CD4-positive, alpha-beta T cell (primary cell): ENCODE measurements at regions of chr16 and their contacts with region 1.

Region 1: DNA sequence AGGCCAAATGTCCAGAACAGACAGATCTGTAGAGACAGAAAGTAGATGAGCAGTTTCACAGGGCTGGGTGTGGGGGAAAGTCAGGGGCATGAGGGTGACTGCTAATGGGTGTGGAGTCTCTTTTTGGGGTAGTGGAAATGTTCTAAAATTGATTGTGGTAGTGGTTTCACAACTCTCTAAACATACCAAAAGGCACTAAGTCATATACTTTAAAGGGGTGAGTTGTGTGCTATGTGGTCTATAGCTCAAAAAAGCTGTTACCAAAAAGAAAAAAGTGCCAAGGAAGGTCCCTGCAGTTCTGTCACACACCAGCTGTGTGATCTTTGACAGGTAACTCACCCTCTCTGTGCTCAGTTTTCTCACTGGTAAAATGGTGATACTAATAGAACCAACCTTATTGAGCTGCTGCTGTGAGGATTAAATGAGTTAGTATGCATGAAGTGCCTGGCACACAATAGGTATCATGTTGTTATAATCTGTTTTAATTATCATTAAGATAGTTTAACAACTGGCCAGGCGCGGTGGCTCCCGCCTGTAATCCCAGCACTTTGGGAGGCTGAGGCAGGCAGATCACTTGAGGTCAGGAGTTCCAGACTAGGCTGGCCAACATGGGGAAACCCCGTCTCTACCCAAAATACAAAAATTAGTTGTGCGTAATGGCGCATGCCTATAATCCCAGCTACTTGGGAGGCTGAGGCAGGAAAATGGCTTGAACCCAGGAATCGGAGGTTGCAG is 10.3 kb downstream of the ITGAX start:
- DNase-seq: peak in 1 of 14 experiments; percentile 74
- ATAC-seq: no peak
- H3K4me3 ChIP-seq: no peak overlapping the region
- H3K4me3 Mint-ChIP-seq: no peak overlapping the region
- H3K27ac ChIP-seq: no peak overlapping the region
- H3K27ac Mint-ChIP-seq: no peak overlapping the region
- H3K4me1 ChIP-seq: no peaks in the 10 kb centered on the region
- H3K4me1 Mint-ChIP-seq: peaks cover 6% of the 10 kb centered on the region
- H3K27me3 ChIP-seq: no peaks in the 10 kb centered on the region
- H3K27me3 Mint-ChIP-seq: peaks cover under 1% of the 10 kb centered on the region
- CTCF ChIP-seq: no peak

Region 2: GRCh38 chr16:31323959-31324629 is 41.2 kb before region 1 on chr16:
- CTCF ChIA-PET with region 1: no interaction called
- POLR2A ChIA-PET with region 1: no interaction called
- intact Hi-C with region 1: loop called in 1 of 2 experiments (anchors 10 kb)
- DNase-seq: no peak
- ATAC-seq: no peak
- H3K4me3 ChIP-seq: no peak overlapping the region
- H3K4me3 Mint-ChIP-seq: no peak overlapping the region
- H3K27ac ChIP-seq: no peak overlapping the region
- H3K27ac Mint-ChIP-seq: no peak overlapping the region
- H3K4me1 ChIP-seq: no peaks in the 10 kb centered on the region
- H3K4me1 Mint-ChIP-seq: peaks cover 4% of the 10 kb centered on the region
- H3K27me3 ChIP-seq: peaks cover 0 to 3% of the 10 kb centered on the region in 2 experiments
- H3K27me3 Mint-ChIP-seq: no peaks in the 10 kb centered on the region
- CTCF ChIP-seq: no peak

Region 3: DNA sequence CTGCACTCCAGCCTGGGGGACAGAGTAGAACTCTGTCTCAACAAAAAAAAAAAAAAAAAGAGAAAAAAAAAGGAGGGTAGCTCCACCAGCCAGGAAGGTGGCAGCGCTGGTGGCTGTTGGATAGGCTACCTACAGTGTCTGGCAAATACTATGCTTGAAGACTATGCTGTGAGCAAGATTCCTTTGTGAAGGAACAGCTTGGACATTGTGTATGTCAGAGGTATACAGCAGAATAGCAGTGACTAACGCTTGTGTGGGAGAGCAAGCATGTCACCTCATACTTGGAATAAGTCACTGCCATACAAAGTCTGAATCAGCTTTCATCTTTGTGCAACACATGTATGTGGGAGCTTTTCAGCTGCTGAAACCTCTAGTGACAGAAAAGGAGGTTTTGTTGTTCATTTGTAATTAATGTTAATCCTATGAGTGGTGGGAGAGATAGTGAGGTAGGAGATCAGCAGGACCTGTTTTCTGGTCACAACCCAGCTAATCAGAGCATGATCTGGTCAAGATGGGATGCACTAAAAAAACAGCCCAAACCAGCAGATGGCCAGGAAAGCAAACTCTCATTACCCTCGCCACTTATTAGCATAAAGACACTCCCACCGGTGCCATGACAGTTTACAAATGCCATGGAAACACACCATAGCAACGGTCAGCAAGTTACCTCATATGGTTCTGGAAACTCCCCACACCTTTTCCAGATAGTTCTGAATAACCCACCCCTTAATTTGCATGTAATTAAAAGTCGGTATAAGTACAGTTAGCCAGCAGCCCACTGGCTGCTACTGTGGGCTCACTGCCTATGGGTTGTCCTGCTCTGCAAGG is 21.1 kb after region 1 on chr16:
- CTCF ChIA-PET with region 1: no interaction called
- POLR2A ChIA-PET with region 1: no interaction called
- intact Hi-C with region 1: no loop called
- DNase-seq: peak in 3 of 14 experiments; percentile 19 to 61 (median 57)
- ATAC-seq: no peak
- H3K4me3 ChIP-seq: no peak overlapping the region
- H3K4me3 Mint-ChIP-seq: no peak overlapping the region
- H3K27ac ChIP-seq: no peak overlapping the region
- H3K27ac Mint-ChIP-seq: no peak overlapping the region
- H3K4me1 ChIP-seq: peaks cover 4% of the 10 kb centered on the region
- H3K4me1 Mint-ChIP-seq: no peaks in the 10 kb centered on the region
- H3K27me3 ChIP-seq: peaks cover 0 to 4% of the 10 kb centered on the region in 2 experiments
- H3K27me3 Mint-ChIP-seq: peaks cover 30% of the 10 kb centered on the region
- CTCF ChIP-seq: no peak

Region 4: DNA sequence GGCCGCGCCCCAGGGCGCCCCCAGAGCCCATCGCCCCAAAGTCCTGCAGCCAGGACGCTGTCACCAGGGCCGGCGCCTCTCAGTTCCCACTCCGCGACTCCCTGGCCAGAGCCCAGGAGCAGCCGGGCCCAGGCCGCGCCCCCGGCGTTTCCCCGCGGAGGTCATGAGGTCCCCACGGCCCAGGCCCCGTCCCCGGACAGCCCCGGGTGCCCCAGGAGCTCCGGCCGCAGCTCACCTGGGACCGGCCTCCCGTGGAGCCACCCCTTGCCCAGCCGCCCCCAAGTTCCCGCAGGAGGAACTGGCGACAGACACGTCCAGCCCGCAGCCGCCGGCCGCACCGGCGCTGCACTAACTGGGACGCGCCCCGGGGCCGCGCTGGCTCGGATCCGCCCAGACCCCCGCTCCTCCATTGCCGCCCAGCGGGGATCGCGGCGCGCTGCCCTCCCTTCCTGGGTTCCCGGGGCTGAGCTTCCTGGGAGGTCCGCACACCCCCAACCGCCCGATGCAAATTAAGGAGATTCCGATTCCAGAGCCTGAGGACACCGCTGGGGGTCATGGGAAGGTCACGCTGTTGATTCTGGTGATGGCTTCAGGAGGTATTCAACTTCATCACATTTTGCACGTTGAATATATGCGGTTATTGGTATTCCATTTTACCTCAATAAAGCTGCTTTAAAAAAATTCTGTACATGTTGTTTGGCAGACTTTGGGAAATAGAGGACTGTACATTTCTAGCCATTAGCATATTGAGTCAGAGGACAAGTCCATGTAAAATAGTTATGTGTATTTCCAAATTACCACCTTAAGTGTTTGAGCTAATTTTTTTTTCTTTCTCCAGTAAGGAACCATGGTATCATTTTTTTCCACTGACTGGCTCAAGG is 172.3 kb after region 1 on chr16:
- CTCF ChIA-PET with region 1: no interaction called
- POLR2A ChIA-PET with region 1: no interaction called
- intact Hi-C with region 1: no loop called
- DNase-seq: no peak
- ATAC-seq: no peak
- H3K4me3 ChIP-seq: no peak overlapping the region
- H3K4me3 Mint-ChIP-seq: no peak overlapping the region
- H3K27ac ChIP-seq: no peak overlapping the region
- H3K27ac Mint-ChIP-seq: no peak overlapping the region
- H3K4me1 ChIP-seq: peaks cover 5% of the 10 kb centered on the region
- H3K4me1 Mint-ChIP-seq: no peaks in the 10 kb centered on the region
- H3K27me3 ChIP-seq: peaks cover 33 to 53% of the 10 kb centered on the region in 2 experiments
- H3K27me3 Mint-ChIP-seq: peaks cover 46% of the 10 kb centered on the region
- CTCF ChIP-seq: no peak